PC-9 (cell line): ENCODE measurements at regions of chr19 and their contacts with region 1.

Region 1: DNA sequence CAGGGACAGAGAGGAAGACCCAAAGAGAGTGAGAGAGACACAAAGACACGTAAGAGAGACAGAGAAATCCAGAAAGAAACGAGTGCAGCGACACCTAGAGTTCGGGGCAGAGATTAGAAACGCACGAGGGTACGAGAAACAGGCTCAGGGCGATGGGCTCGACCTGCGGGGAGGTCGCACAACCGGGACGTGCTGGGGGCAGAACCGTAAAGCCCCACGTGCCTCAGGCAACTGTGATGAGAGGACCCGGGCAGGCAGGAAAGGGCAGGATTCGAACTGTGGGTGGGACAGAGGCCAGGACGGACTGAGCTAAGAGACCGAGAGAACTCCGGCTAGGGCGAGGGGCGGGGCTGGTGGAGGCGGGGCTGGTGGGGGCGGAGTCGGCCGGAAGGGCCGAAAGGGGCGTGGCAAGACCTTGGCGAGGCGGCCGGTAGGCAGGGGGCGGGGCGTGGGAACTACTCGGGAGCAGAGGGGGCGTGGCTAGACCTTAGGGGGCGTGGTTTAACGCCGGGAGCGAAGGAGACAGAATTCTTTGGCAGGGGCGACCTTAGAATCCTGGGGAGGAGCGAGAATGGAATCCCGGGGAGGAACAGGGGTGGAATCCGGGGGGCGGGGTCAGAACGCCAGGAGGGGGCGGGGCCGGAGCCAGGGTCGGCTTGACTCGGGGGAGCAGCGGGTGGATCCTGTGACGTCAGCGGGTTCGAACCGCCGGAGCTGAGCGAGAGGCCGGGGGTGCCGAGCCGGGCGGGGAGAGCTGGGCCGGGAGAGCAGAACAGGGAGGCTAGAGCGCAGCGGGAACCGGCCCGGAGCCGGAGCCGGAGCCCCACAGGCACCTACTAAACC is at the start of gene NECTIN2:
- DNase-seq: peak; percentile 93 to 100
- H3K4me3 ChIP-seq: peak within 1 kb of the TSS; percentile 83
- H3K27ac ChIP-seq: peak within 1 kb of the TSS; percentile 86
- H3K4me1 ChIP-seq: peaks cover 17% of the 10 kb centered on the region
- H3K27me3 ChIP-seq: no peaks in the 10 kb centered on the region
- CTCF ChIP-seq: peak; percentile 93
- total RNA-seq, gene NECTIN2: 115 and 136 TPM in 2 replicates

Region 2: GRCh38 chr19:44570984-44571684 is 274.7 kb before region 1 on chr19:
- CTCF ChIA-PET with region 1: interaction called, 5 read pairs
- POLR2A ChIA-PET with region 1: no interaction called
- intact Hi-C with region 1: loop called (anchors 5 kb)
- DNase-seq: peak; percentile 67 to 80
- H3K4me3 ChIP-seq: no peak overlapping the region
- H3K27ac ChIP-seq: no peak overlapping the region; the same call in 1 of the 2 replicates
- H3K4me1 ChIP-seq: peaks cover 67% of the 10 kb centered on the region
- H3K27me3 ChIP-seq: no peaks in the 10 kb centered on the region
- CTCF ChIP-seq: peak; percentile 92

Region 3: GRCh38 chr19:44626048-44626624 is 219.7 kb before region 1 on chr19:
- CTCF ChIA-PET with region 1: no interaction called
- POLR2A ChIA-PET with region 1: interaction called, 36 read pairs
- intact Hi-C with region 1: no loop called
- DNase-seq: peak; percentile 94 to 98
- H3K4me3 ChIP-seq: no peak overlapping the region
- H3K27ac ChIP-seq: peak overlapping the region; percentile 91
- H3K4me1 ChIP-seq: peaks cover 31% of the 10 kb centered on the region
- H3K27me3 ChIP-seq: no peaks in the 10 kb centered on the region
- CTCF ChIP-seq: no peak

Region 4: GRCh38 chr19:44689056-44689895 is 156.6 kb before region 1 on chr19:
- CTCF ChIA-PET with region 1: no interaction called
- POLR2A ChIA-PET with region 1: interaction called, 4 read pairs
- intact Hi-C with region 1: loop called (anchors 1 kb)
- DNase-seq: peak; percentile 60 to 76
- H3K4me3 ChIP-seq: no peak overlapping the region
- H3K27ac ChIP-seq: peak overlapping the region; percentile 100
- H3K4me1 ChIP-seq: peaks cover 83% of the 10 kb centered on the region
- H3K27me3 ChIP-seq: no peaks in the 10 kb centered on the region
- CTCF ChIP-seq: peak; percentile 98

Region 5: GRCh38 chr19:44776435-44777096 is 69.3 kb before region 1 on chr19:
- CTCF ChIA-PET with region 1: interaction called, 6 read pairs
- POLR2A ChIA-PET with region 1: interaction called, 3 read pairs
- intact Hi-C with region 1: loop called (anchors 1 kb)
- DNase-seq: peak; percentile 96 to 97
- H3K4me3 ChIP-seq: peak overlapping the region; percentile 99
- H3K27ac ChIP-seq: peak overlapping the region; percentile 97
- H3K4me1 ChIP-seq: peaks cover 73% of the 10 kb centered on the region
- H3K27me3 ChIP-seq: no peaks in the 10 kb centered on the region
- CTCF ChIP-seq: no peak

Region 6: DNA sequence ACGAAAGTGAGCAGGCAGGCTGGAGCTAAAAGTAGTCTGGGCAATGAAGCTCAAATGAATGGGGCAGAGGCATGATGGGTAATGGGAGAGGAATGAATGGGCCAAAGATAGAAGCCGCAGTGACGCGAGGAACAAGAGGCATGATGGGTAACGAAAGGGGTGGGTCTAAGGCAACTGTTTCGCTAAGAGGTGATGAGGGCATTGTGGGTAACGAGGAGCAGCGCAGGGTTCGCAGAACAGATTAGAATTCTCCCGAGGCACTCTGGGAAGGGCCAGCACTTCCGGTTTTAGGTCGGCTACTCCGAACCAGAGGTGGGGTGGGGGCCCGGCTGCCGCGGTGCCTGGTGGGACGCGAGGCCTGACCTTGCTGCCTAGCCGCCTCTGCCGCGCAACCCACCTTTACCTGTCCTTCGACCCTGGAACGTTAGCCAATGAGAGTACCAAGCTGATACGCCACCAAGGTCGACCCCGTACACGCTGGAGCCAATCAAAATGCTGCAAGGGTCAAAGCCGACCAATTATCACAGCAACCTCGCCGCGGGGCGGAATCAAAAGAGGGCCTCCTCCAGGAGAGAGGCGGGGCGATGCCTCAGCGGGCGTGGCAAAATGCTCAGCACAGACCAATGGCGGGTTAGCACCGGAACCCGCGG is 44.7 kb after region 1 on chr19:
- CTCF ChIA-PET with region 1: no interaction called
- POLR2A ChIA-PET with region 1: interaction called, 11 read pairs
- intact Hi-C with region 1: loop called (anchors 1 kb)
- DNase-seq: peak; percentile 100
- H3K4me3 ChIP-seq: peak overlapping the region; percentile 61
- H3K27ac ChIP-seq: peak overlapping the region; percentile 75
- H3K4me1 ChIP-seq: peaks cover 22% of the 10 kb centered on the region
- H3K27me3 ChIP-seq: no peaks in the 10 kb centered on the region
- CTCF ChIP-seq: no peak